Left cardiac atrium (tissue), 4 donors: ENCODE measurements at regions of chr3 and their contacts with region 1.

Region 1: GRCh38 chr3:53072653-53073552 is 27.0 kb upstream of the SFMBT1 start:
- DNase-seq: peak; percentile 90
- ATAC-seq: peak; percentile 95 to 97

Region 2: DNA sequence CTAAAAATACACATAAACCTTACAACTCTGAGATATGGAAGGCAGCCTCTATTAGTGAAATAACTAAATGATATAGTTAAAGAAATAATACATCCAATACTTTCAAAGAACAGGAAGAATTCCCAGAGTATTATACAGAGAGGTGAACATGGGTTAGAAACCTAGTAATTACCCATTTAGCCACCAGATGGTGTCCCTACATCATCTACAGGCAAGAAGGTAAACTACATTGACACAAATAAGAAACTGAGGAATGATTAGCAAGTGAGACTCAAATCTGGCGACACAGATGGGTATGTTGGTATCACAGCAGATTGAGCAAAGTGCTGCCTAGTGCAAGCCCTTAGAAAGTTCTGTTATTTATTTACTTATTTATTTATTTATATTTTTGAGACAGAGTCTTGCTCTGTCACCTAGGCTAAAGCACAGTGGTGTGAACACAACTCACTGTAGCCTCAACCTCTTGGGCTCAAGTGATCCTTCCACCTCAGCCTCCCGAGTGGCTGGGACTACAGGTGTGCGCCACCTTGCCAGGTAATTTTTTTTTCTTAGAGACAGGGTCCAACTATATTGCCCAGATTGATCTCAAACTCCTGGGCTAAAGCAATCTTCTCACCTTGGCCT is 330.4 kb before region 1 on chr3:
- intact Hi-C with region 1: loop called in 1 of 2 experiments (anchors 5 kb)
- DNase-seq: no peak
- ATAC-seq: peak in 1 of 2 donors; percentile 36

Region 3: DNA sequence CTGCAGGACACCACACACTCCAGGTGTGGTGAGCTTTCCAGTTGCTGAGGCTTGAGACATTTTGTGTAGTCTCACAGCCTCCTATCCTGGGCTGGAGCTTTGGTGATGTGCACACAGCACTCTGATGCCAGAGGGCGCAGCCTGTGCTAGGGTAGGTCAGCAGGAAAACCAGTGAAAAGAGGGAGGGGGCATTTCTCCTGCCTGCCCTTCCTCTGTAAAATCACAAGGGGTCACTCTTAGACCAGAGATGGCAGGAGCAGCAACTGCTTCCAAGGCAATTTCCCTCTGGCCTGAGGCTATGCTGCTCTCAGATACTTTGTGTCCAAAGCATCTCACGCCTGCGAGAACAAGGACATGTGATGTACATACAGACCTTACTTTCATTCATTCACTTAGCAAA is 221.6 kb before region 1 on chr3:
- intact Hi-C with region 1: loop called in 1 of 2 experiments (anchors 2 kb)
- DNase-seq: no peak
- ATAC-seq: peak; percentile 40 to 65

Region 4: DNA sequence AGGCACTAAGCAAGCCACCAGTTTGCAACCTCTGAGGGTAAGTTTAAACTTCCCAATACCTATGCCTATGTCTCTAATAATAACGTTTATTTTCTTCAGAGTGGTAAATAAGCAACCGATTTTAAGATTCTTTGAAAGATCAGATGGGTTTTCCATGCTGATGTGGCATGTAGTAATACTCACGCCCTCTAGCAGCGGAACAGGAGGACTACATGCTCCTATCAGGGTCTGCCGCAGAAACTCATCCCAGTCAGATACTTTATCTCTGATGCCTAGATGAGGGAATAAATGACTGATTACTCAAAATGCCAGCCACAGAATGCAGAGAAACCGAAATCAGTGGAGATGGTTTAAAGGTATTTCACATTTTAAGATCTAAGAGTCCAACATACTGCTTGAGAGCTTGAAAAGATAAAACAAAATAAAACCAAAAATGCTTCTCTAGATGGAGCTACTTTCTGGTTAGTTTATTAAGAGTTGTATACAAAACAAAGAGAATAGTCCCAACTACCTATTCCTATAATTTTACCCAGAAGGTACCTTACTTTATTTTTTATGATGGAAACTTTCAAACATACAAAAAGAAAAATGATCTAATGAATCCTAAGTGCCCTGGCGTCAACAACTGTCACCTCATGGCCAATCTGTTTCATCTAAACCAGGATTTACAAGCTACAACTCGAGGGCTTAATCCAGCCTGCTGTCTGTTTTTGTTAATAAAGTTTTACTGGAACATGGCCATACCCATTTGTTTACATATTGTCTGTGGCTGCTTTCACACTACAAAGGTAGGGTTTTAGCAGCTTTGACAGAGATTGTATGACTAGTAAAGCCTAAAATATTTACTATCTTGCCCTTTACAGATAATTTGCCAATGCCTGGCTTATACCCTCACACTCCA is 138.0 kb before region 1 on chr3:
- intact Hi-C with region 1: loop called in 1 of 2 experiments (anchors 10 kb)
- DNase-seq: peak; percentile 38
- ATAC-seq: peak; percentile 76 to 85

Region 5: DNA sequence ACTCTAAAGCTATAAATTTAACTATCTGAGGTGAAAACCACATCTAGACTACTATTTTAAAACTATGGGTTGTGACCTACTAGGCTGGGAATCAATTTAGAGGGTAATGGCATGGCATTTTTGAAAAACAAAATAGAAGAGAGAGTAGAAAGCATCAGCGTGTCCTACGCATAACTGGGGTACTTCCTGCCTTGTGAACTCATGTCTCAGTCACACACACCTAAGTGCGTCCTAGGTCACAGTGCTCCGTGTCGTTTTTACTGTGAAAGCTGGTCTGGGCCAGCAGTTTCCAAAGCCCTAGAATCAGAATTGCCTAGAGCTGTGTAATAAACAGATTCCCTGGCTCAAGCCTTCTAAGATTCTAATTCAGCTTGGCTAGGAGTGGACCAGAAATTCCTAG is 25.0 kb after region 1 on chr3:
- intact Hi-C with region 1: loop called in 1 of 2 experiments (anchors 2 kb)
- DNase-seq: no peak
- ATAC-seq: no peak